ENCODE measurements at regions of chr1 and their contacts with region 1.

Region 1: DNA sequence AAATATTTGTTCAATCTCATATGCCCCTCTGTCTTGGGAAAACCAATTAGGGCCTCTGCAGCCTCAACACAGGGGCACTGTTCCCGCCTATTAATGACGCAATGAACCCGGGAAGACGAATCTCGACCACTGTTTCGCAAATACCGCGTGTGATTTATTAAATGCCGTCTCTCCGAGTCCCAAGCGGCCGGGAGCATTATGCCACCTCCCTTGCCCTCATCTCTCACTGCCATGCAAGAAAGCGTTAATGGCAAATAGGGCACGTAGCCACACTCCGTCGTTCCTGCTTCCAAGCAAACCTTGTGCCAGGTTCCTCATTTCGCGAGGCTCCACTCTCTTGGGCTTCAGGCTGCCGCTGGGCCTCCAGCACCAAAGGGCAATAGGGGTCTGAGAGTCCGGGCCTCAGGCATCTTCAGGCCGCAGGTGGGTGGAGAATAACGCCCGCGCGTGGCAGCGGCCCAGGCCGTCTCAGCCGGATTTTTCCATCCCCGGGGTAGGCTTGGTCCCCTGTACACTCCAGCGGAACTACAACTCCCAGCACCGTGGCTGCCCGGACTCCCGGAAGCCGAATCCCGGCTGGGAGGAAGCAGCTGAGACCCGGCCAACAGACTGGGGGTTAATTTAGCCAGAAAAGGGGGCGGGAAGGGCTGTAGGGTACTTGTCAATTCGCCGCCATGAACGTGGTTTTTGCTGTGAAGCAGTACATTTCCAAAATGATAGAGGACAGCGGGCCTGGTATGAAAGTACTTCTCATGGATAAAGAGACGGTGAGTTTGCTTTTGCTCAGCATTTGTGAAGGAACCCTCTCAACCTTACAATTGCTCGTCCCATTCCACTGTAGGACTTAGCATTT is at the start of gene VPS45:
- DNase-seq: peak; percentile 86
- H3K4me3 Mint-ChIP-seq: peak within 1 kb of the TSS; percentile 95
- H3K27ac Mint-ChIP-seq: peak within 1 kb of the TSS; percentile 89
- H3K4me1 Mint-ChIP-seq: peaks cover 39% of the 10 kb centered on the region
- H3K27me3 Mint-ChIP-seq: no peaks in the 10 kb centered on the region
- total RNA-seq, gene VPS45: 35.4 to 39.0 TPM

Region 2: GRCh38 chr1:150010393-150011115 is 56.9 kb before region 1 on chr1 and contains the start of gene OTUD7B:
- CTCF ChIA-PET with region 1: interaction called, 7 read pairs
- POLR2A ChIA-PET with region 1: interaction called, 10 read pairs
- DNase-seq: peak; percentile 80
- H3K4me3 Mint-ChIP-seq: peak within 1 kb of the TSS; percentile 91
- H3K27ac Mint-ChIP-seq: peak within 1 kb of the TSS; percentile 76
- H3K4me1 Mint-ChIP-seq: peaks cover 35% of the 10 kb centered on the region
- H3K27me3 Mint-ChIP-seq: no peaks in the 10 kb centered on the region
- total RNA-seq, gene OTUD7B: 15.9 to 17.4 TPM

Region 3: DNA sequence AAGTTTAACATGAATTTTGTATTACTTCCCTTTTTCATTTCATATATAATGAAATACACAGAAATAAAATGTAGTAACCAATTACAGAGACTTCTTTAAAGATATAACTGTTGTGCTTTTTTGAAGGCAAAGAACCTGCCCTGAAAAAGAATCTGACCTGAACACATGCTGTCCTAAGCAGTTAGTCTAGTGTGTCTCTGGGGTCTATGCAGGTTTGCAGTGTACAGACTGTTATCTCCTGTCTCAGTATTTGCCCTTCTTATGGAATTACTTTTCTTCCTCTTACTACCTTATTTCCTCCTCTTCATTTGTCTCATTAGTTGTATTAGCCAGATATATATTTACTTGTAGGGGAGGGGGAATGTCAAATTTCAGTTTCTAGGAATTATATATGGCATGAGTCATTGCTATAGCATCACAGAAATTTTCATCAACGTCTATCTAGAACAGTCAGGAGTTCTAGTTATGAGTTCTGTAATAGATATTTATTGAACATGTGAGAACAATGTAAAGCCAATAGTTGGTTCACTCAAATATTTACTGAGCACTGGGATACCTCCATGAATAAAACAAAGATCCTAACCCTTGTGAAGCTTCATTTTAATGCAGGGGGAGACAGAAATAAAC is 53.9 kb after region 1 on chr1:
- CTCF ChIA-PET with region 1: no interaction called
- POLR2A ChIA-PET with region 1: no interaction called
- DNase-seq: no peak
- H3K4me3 Mint-ChIP-seq: no peak overlapping the region
- H3K27ac Mint-ChIP-seq: no peak overlapping the region
- H3K4me1 Mint-ChIP-seq: peaks cover 9% of the 10 kb centered on the region
- H3K27me3 Mint-ChIP-seq: no peaks in the 10 kb centered on the region

Region 4: GRCh38 chr1:150149271-150150132 is 82.1 kb after region 1 on chr1 and contains the start of gene PLEKHO1:
- CTCF ChIA-PET with region 1: interaction called, 4 read pairs
- POLR2A ChIA-PET with region 1: interaction called, 34 read pairs
- DNase-seq: peak; percentile 87
- H3K4me3 Mint-ChIP-seq: peak within 1 kb of the TSS; percentile 86
- H3K27ac Mint-ChIP-seq: peak within 1 kb of the TSS; percentile 93
- H3K4me1 Mint-ChIP-seq: peaks cover 66% of the 10 kb centered on the region
- H3K27me3 Mint-ChIP-seq: peaks cover 1% of the 10 kb centered on the region
- total RNA-seq, gene PLEKHO1: 89.8 to 92.9 TPM

Region 5: GRCh38 chr1:150168960-150169601 is 101.7 kb after region 1 on chr1:
- CTCF ChIA-PET with region 1: interaction called, 225 read pairs
- POLR2A ChIA-PET with region 1: interaction called, 4 read pairs
- DNase-seq: peak; percentile 65
- H3K4me3 Mint-ChIP-seq: no peak overlapping the region
- H3K27ac Mint-ChIP-seq: no peak overlapping the region
- H3K4me1 Mint-ChIP-seq: peaks cover 13% of the 10 kb centered on the region
- H3K27me3 Mint-ChIP-seq: peaks cover 2% of the 10 kb centered on the region

Measured in activated CD4-positive, alpha-beta memory T cell treated with anti-CD3 and anti-CD28 coated beads, Interleukin-2, amount 10 ng/mL, durations not matched to agents 7 days and 5 days (primary cell).